CD4-positive, alpha-beta memory T cell (primary cell): ENCODE measurements at regions of chr12 and their contacts with region 1.

Region 1: GRCh38 chr12:52980693-52981423 is 25.4 kb upstream of the EIF4B start:
- DNase-seq: peak; percentile 78 to 83 (median 82)
- H3K4me3 ChIP-seq: no peak overlapping the region
- H3K4me3 Mint-ChIP-seq: no peak overlapping the region
- H3K27ac ChIP-seq: no peak overlapping the region
- H3K27ac Mint-ChIP-seq: peak overlapping the region in 1 of 7 donors; percentile 65
- H3K4me1 ChIP-seq: no peaks in the 10 kb centered on the region
- H3K4me1 Mint-ChIP-seq: peaks cover 0 to 5% (median 1%) of the 10 kb centered on the region in 4 donors
- H3K27me3 ChIP-seq: peaks cover 9% of the 10 kb centered on the region
- H3K27me3 Mint-ChIP-seq: peaks cover 27 to 30% of the 10 kb centered on the region in 2 donors

Region 2: GRCh38 chr12:52582971-52583456 is 397.8 kb before region 1 on chr12:
- CTCF ChIA-PET with region 1: interaction called, 7 read pairs
- POLR2A ChIA-PET with region 1: no interaction called
- intact Hi-C with region 1: loop called (anchors 2 kb)
- DNase-seq: peak; percentile 52 to 64 (median 62)
- H3K4me3 ChIP-seq: no peak overlapping the region
- H3K4me3 Mint-ChIP-seq: peak overlapping the region in 2 of 8 donors; percentile 27 to 36
- H3K27ac ChIP-seq: no peak overlapping the region
- H3K27ac Mint-ChIP-seq: peak overlapping the region; percentile 8 to 95 (median 73)
- H3K4me1 ChIP-seq: peaks cover 25% of the 10 kb centered on the region
- H3K4me1 Mint-ChIP-seq: peaks cover 19 to 49% (median 27%) of the 10 kb centered on the region in 4 donors
- H3K27me3 ChIP-seq: no peaks in the 10 kb centered on the region
- H3K27me3 Mint-ChIP-seq: no peaks in the 10 kb centered on the region

Region 3: DNA sequence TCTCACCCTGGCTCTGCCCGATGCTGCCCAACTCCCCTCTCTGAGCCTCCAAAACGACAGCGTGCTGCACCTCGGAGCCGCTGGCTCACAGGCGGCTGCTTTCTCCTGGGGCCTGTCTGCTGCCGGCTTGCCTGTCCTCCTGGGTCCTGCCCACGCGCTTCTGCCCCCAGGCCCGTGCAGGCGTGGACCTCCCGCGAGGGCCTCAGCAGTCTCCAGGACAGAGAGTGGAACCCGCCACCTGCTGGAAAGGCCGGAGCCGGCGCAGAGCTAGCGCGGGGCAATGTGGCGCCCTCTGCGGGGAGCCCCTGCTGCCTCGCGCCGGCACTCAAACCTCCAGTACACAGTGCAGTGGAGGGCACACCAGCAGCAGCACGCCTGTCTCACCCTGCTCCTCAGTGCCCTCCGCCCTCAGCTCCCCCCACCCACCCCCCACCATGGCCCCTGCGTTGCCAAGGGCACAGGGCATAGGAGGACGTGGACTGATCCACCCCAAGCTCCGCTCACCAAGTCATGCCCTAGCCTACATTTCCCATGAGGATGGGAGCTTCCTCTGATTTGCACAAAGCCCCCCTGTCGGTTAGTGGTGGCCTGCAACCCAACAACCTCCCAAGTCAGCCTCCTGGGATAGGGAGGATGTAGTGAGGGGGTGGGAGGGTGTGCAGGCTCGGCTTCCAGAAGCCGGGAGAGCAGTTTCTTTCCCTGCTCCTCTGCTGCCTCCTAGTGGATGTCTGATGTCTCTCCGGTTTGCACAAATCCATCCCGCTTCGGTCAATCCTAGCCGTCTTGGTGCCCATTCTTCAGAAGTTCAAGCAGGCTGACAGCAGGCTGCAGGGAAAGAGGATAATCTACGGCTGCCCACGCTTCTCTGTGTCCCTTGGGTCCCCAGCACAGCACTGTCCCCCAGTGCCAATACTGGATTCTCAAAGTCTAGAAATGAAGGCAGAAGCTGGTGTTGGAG is 101.2 kb before region 1 on chr12:
- CTCF ChIA-PET with region 1: interaction called, 459 read pairs
- POLR2A ChIA-PET with region 1: interaction called, 3 read pairs
- intact Hi-C with region 1: loop called (anchors 1 kb)
- DNase-seq: peak; percentile 65 to 70 (median 67)
- H3K4me3 ChIP-seq: no peak overlapping the region
- H3K4me3 Mint-ChIP-seq: peak overlapping the region; percentile 48 to 85 (median 73)
- H3K27ac ChIP-seq: no peak overlapping the region
- H3K27ac Mint-ChIP-seq: peak overlapping the region in 1 of 7 donors; percentile 52
- H3K4me1 ChIP-seq: peaks cover 8% of the 10 kb centered on the region
- H3K4me1 Mint-ChIP-seq: peaks cover 3 to 14% (median 10%) of the 10 kb centered on the region in 4 donors
- H3K27me3 ChIP-seq: no peaks in the 10 kb centered on the region
- H3K27me3 Mint-ChIP-seq: peaks cover 2 to 9% of the 10 kb centered on the region in 2 donors

Region 4: DNA sequence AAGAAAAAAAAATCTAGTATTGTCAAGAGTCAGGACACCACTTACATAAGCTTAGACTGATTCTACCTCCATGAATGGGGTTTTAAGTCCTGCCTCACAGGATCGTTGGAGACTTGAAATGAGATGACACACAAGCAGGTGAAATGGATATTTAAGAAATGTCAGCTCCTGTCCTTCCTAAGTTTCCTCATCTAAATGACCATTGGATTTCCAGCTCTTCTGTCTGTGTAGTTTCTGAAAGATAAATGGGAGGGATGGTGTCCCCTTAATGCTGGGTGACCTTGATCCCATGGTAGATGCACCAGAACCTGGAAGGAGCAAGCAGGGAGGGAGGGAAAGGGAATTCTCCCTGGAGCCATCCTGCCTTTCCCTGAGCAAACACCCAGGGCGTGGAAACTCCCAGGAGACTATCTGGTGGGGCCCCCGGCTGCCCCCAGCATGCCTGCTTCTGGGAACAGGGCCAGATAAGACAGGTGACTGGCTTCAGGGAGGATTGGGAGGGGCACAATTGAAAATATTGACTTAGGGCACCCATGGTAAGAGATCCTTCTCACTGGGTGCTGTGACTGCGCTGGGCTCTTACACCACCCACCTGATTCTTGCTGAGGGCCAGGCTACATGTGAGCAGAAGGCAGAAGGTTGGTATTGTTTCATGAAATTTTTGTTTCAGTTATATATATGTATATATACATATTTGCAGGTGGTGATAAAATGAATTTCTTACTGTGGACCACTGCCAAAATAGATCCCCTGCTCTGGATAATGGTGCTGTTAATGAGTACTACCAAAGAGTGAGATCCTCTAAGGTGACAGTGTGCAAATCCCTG is 85.6 kb before region 1 on chr12:
- CTCF ChIA-PET with region 1: interaction called, 459 read pairs
- POLR2A ChIA-PET with region 1: no interaction called
- intact Hi-C with region 1: no loop called
- DNase-seq: no peak
- H3K4me3 ChIP-seq: no peak overlapping the region
- H3K4me3 Mint-ChIP-seq: no peak overlapping the region
- H3K27ac ChIP-seq: no peak overlapping the region
- H3K27ac Mint-ChIP-seq: peak overlapping the region in 1 of 7 donors; percentile 31
- H3K4me1 ChIP-seq: no peaks in the 10 kb centered on the region
- H3K4me1 Mint-ChIP-seq: no peaks in the 10 kb centered on the region
- H3K27me3 ChIP-seq: no peaks in the 10 kb centered on the region
- H3K27me3 Mint-ChIP-seq: peaks cover 2 to 16% of the 10 kb centered on the region in 2 donors

Region 5: GRCh38 chr12:52942066-52942900 is 38.6 kb before region 1 on chr12:
- CTCF ChIA-PET with region 1: interaction called, 10 read pairs
- POLR2A ChIA-PET with region 1: no interaction called
- intact Hi-C with region 1: no loop called
- DNase-seq: no peak
- H3K4me3 ChIP-seq: no peak overlapping the region
- H3K4me3 Mint-ChIP-seq: no peak overlapping the region
- H3K27ac ChIP-seq: no peak overlapping the region
- H3K27ac Mint-ChIP-seq: no peak overlapping the region
- H3K4me1 ChIP-seq: no peaks in the 10 kb centered on the region
- H3K4me1 Mint-ChIP-seq: no peaks in the 10 kb centered on the region
- H3K27me3 ChIP-seq: no peaks in the 10 kb centered on the region
- H3K27me3 Mint-ChIP-seq: peaks cover 4 to 6% of the 10 kb centered on the region in 2 donors

Region 6: DNA sequence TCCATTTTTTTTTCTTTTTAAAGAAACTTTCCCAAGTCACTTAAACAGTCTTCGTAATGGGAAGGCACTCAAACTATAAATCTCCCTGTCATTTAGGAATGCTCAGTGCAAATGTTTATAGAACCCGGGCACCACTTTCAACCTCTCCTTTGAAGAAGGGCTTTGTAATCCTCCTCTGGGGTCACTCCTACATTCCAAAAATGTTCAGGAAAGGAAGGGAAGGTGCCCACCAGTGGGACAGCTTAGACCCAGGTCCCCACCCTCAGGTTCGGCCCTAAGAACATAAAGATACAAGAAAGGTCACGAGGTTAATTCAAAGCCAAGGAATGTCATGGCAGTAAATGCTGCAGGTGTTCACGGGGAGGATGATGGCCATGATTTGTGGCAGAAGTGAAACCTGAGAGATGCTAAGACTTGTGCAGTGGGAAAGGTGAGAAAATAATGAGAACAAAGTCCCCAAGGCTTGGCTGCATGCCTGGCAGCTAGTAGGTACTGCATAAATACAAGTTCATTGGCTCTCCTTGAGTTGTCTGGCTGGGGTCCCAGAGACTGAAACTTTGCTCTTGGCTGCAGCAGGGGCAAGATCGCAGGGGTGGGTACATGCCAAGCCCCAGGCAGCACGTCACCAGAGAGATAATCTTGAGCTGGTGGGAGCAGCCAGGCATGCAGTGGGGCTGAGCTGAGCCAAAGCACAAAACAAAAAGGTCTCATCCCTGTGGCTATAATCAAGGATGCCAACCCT is 10.9 kb before region 1 on chr12:
- CTCF ChIA-PET with region 1: interaction called, 16 read pairs
- POLR2A ChIA-PET with region 1: no interaction called
- intact Hi-C with region 1: no loop called
- DNase-seq: no peak
- H3K4me3 ChIP-seq: no peak overlapping the region
- H3K4me3 Mint-ChIP-seq: no peak overlapping the region
- H3K27ac ChIP-seq: no peak overlapping the region
- H3K27ac Mint-ChIP-seq: no peak overlapping the region
- H3K4me1 ChIP-seq: no peaks in the 10 kb centered on the region
- H3K4me1 Mint-ChIP-seq: no peaks in the 10 kb centered on the region
- H3K27me3 ChIP-seq: no peaks in the 10 kb centered on the region
- H3K27me3 Mint-ChIP-seq: peaks cover 4 to 9% of the 10 kb centered on the region in 2 donors

Region 7: GRCh38 chr12:53014709-53015108 is 33.9 kb after region 1 on chr12:
- CTCF ChIA-PET with region 1: no interaction called
- POLR2A ChIA-PET with region 1: no interaction called
- intact Hi-C with region 1: no loop called
- DNase-seq: no peak
- H3K4me3 ChIP-seq: no peak overlapping the region
- H3K4me3 Mint-ChIP-seq: peak overlapping the region in 3 of 8 donors; percentile 6 to 60 (median 33)
- H3K27ac ChIP-seq: no peak overlapping the region
- H3K27ac Mint-ChIP-seq: peak overlapping the region in 3 of 7 donors; percentile 18 to 83 (median 70)
- H3K4me1 ChIP-seq: peaks cover 45% of the 10 kb centered on the region
- H3K4me1 Mint-ChIP-seq: peaks cover 28 to 55% (median 42%) of the 10 kb centered on the region in 4 donors
- H3K27me3 ChIP-seq: no peaks in the 10 kb centered on the region
- H3K27me3 Mint-ChIP-seq: no peaks in the 10 kb centered on the region